Calu3 (cell line): ENCODE measurements at regions of chr3 and their contacts with region 1.

Region 1: GRCh38 chr3:79809106-79809505 is 41.3 kb upstream of the ROBO1 start:
- DNase-seq: no peak
- H3K4me3 Mint-ChIP-seq: no peak overlapping the region
- H3K27ac Mint-ChIP-seq: no peak overlapping the region
- H3K4me1 Mint-ChIP-seq: no peaks in the 10 kb centered on the region
- H3K27me3 Mint-ChIP-seq: no peaks in the 10 kb centered on the region
- CTCF ChIP-seq: no peak

Region 2: GRCh38 chr3:79886204-79886603 is 77.1 kb after region 1 on chr3:
- CTCF ChIA-PET with region 1: no interaction called
- intact Hi-C with region 1: loop called (anchors 10 kb)
- DNase-seq: no peak
- H3K4me3 Mint-ChIP-seq: no peak overlapping the region
- H3K27ac Mint-ChIP-seq: no peak overlapping the region
- H3K4me1 Mint-ChIP-seq: no peaks in the 10 kb centered on the region
- H3K27me3 Mint-ChIP-seq: no peaks in the 10 kb centered on the region
- CTCF ChIP-seq: no peak

Region 3: DNA sequence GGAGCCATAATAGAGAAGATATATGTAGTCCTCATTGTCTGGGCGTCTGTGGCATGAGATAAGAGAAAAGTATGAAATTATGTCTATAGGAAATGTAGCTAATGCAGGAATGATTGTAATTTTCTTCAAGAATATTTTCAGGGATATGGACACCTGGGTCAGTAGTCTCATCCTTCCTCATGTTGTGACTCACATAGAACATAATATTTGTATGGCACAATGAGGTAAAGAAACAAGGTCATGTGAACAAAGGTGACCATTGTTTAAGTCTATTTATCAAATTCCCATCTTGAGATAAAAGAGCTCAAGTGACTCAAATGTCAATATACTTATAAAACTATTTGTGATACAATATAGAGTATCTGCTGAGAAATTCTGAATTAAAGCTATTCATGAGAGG is 304.2 kb after region 1 on chr3:
- CTCF ChIA-PET with region 1: no interaction called
- intact Hi-C with region 1: loop called (anchors 10 kb)
- DNase-seq: no peak
- H3K4me3 Mint-ChIP-seq: no peak overlapping the region
- H3K27ac Mint-ChIP-seq: no peak overlapping the region
- H3K4me1 Mint-ChIP-seq: peaks cover 19% of the 10 kb centered on the region
- H3K27me3 Mint-ChIP-seq: no peaks in the 10 kb centered on the region
- CTCF ChIP-seq: no peak